ENCODE measurements at regions of chr2 and their contacts with region 1.

Region 1: DNA sequence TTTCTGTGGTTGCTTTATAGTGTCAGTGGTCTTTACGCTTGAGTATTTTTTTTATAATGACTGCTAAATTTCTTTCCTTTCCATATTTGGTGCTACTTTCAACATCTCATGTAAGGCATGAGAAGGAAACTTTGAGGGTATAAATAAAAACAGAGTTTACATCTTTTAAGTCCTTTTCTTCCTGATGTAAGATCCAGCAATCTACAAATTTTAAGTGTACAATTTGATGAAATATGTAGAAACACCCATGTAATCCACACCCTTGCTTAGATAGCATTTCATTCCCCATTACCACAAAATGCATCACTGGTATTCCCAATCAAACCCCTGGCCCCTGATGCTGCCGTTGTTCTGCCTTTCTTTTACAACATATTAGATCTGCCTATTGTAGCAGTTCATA is 769.1 kb downstream of the CCDC85A start:
- DNase-seq: no peak
- H3K4me3 ChIP-seq: no peak overlapping the region
- H3K27ac ChIP-seq: no peak overlapping the region
- H3K4me1 ChIP-seq: no peaks in the 10 kb centered on the region
- H3K27me3 ChIP-seq: no peaks in the 10 kb centered on the region
- CTCF ChIP-seq: no peak

Region 2: GRCh38 chr2:56969513-56969912 is 16.6 kb after region 1 on chr2:
- CTCF ChIA-PET with region 1: no interaction called
- POLR2A ChIA-PET with region 1: interaction called, 23 read pairs
- intact Hi-C with region 1: no loop called
- DNase-seq: no peak
- H3K4me3 ChIP-seq: no peak overlapping the region
- H3K27ac ChIP-seq: no peak overlapping the region
- H3K4me1 ChIP-seq: no peaks in the 10 kb centered on the region
- H3K27me3 ChIP-seq: no peaks in the 10 kb centered on the region
- CTCF ChIP-seq: no peak